Activated CD8-positive, alpha-beta memory T cell treated with anti-CD3 and anti-CD28 coated beads, Interleukin-2, amount 10 ng/mL, durations not matched to agents 7 days and 5 days (primary cell): ENCODE measurements at regions of chr3 and their contacts with region 1.

Region 1: DNA sequence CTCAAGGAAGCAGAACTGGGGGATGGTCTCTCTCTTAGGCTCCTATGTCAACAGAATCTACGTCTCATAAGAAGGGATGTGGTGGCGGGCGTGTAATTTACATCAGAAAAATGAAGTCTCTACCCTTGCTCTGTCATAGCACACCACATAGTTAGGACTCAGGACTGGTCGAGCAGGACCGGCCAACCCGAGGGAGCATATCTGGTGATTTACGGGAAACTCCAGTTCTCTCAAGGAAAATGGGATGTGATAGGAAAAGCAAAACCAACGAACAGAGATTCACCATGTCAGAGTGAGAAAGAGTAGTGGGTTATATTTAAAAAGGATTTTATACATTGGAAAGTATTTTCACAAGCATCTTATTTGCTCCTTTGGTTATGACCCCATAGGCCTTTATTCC is 54.7 kb downstream of the IGF2BP2 start:
- DNase-seq: no peak
- ATAC-seq: no peak
- H3K4me3 Mint-ChIP-seq: no peak overlapping the region
- H3K27ac Mint-ChIP-seq: no peak overlapping the region
- H3K4me1 Mint-ChIP-seq: no peaks in the 10 kb centered on the region
- H3K27me3 Mint-ChIP-seq: peaks cover 30% of the 10 kb centered on the region

Region 2: GRCh38 chr3:185677146-185677829 is 92.8 kb before region 1 on chr3:
- CTCF ChIA-PET with region 1: interaction called, 35 read pairs
- DNase-seq: no peak
- ATAC-seq: peak; percentile 61
- H3K4me3 Mint-ChIP-seq: no peak overlapping the region
- H3K27ac Mint-ChIP-seq: no peak overlapping the region
- H3K4me1 Mint-ChIP-seq: no peaks in the 10 kb centered on the region
- H3K27me3 Mint-ChIP-seq: peaks cover 50% of the 10 kb centered on the region

Region 3: DNA sequence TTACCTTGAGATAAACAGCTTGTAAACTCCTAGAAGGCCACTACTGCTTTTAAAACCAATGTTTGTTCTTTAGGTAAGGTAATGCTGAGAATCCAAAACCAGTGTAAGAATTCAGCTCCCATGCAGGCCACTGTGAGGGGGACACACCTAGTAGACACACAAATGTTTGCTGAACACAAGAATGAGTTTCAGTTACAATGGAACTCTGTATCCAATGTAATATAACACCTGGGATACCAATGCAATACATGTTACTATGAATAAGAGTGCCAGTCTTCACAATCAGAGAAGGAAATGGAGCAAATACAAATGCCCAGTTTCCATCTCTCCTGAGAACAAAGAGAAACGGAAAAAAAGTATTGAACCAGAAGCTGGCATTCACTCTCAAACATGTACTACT is 11.2 kb before region 1 on chr3:
- CTCF ChIA-PET with region 1: interaction called, 12 read pairs
- DNase-seq: no peak
- ATAC-seq: no peak
- H3K4me3 Mint-ChIP-seq: no peak overlapping the region
- H3K27ac Mint-ChIP-seq: no peak overlapping the region
- H3K4me1 Mint-ChIP-seq: no peaks in the 10 kb centered on the region
- H3K27me3 Mint-ChIP-seq: peaks cover 55% of the 10 kb centered on the region

Region 4: DNA sequence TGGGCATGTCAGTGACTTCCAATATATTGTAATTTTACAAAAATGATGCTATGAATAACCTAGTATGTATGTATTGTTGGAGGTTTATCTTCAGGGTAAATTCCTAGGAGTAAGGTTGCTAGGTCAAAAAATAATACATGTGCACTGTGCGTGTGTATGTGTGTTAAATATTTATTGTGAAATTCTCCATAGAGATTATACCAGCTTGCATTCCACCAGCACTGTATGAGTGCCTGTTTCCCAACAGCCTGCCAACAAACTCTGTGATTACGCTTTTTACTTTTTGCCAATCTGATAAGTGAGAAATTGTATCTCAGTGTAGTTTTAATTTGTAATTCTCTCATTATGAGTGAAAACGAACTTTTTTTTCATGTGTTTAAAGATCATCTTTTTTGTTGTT is 67.3 kb after region 1 on chr3:
- CTCF ChIA-PET with region 1: no interaction called
- DNase-seq: no peak
- ATAC-seq: no peak
- H3K4me3 Mint-ChIP-seq: no peak overlapping the region
- H3K27ac Mint-ChIP-seq: no peak overlapping the region
- H3K4me1 Mint-ChIP-seq: no peaks in the 10 kb centered on the region
- H3K27me3 Mint-ChIP-seq: peaks cover 22% of the 10 kb centered on the region